ENCODE measurements at regions of chr5 and their contacts with region 1.

Region 1: GRCh38 chr5:32276173-32276853 is 36.4 kb downstream of the MTMR12 start:
- DNase-seq: peak; percentile 23
- ATAC-seq: no peak
- H3K4me3 ChIP-seq: no peak overlapping the region
- H3K27ac ChIP-seq: peak overlapping the region; percentile 67
- H3K4me1 ChIP-seq: peaks cover 93% of the 10 kb centered on the region
- H3K27me3 ChIP-seq: no peaks in the 10 kb centered on the region
- CTCF ChIP-seq: no peak
- EP300 ChIP-seq: no peak
- POLR2A ChIP-seq: no peak
- RAD21 ChIP-seq: no peak

Region 2: GRCh38 chr5:32004404-32004803 is 271.9 kb before region 1 on chr5:
- CTCF ChIA-PET with region 1: no interaction called
- POLR2A ChIA-PET with region 1: no interaction called
- in situ Hi-C with region 1: no loop called
- intact Hi-C with region 1: no loop called
- DNase-seq: no peak
- ATAC-seq: no peak
- H3K4me3 ChIP-seq: no peak overlapping the region
- H3K27ac ChIP-seq: no peak overlapping the region
- H3K4me1 ChIP-seq: no peaks in the 10 kb centered on the region
- H3K27me3 ChIP-seq: no peaks in the 10 kb centered on the region
- CTCF ChIP-seq: no peak
- EP300 ChIP-seq: no peak
- POLR2A ChIP-seq: no peak
- RAD21 ChIP-seq: no peak

Region 3: GRCh38 chr5:32329308-32329834 is 53.1 kb after region 1 on chr5:
- CTCF ChIA-PET with region 1: no interaction called
- POLR2A ChIA-PET with region 1: interaction called, 10 read pairs
- in situ Hi-C with region 1: no loop called
- intact Hi-C with region 1: loop called (anchors 5 kb)
- DNase-seq: peak; percentile 73
- ATAC-seq: peak; percentile 78
- H3K4me3 ChIP-seq: no peak overlapping the region
- H3K27ac ChIP-seq: peak overlapping the region; percentile 95
- H3K4me1 ChIP-seq: peaks cover 66% of the 10 kb centered on the region
- H3K27me3 ChIP-seq: no peaks in the 10 kb centered on the region
- CTCF ChIP-seq: peak; percentile 94
- EP300 ChIP-seq: no peak
- POLR2A ChIP-seq: no peak
- RAD21 ChIP-seq: peak; percentile 83

Region 4: GRCh38 chr5:32419791-32420190 is 143.5 kb after region 1 on chr5:
- CTCF ChIA-PET with region 1: no interaction called
- POLR2A ChIA-PET with region 1: no interaction called
- in situ Hi-C with region 1: no loop called
- intact Hi-C with region 1: no loop called
- DNase-seq: no peak
- ATAC-seq: peak; percentile 37; the same call in 2 of the 3 replicates
- H3K4me3 ChIP-seq: no peak overlapping the region
- H3K27ac ChIP-seq: no peak overlapping the region
- H3K4me1 ChIP-seq: no peaks in the 10 kb centered on the region
- H3K27me3 ChIP-seq: no peaks in the 10 kb centered on the region
- CTCF ChIP-seq: no peak
- EP300 ChIP-seq: no peak
- POLR2A ChIP-seq: no peak
- RAD21 ChIP-seq: no peak

Region 5: GRCh38 chr5:32498484-32498883 is 222.2 kb after region 1 on chr5:
- CTCF ChIA-PET with region 1: no interaction called
- POLR2A ChIA-PET with region 1: no interaction called
- in situ Hi-C with region 1: no loop called
- intact Hi-C with region 1: no loop called
- DNase-seq: no peak
- ATAC-seq: peak; percentile 52; the same call in 1 of the 3 replicates
- H3K4me3 ChIP-seq: no peak overlapping the region
- H3K27ac ChIP-seq: no peak overlapping the region
- H3K4me1 ChIP-seq: peaks cover 39% of the 10 kb centered on the region
- H3K27me3 ChIP-seq: no peaks in the 10 kb centered on the region
- CTCF ChIP-seq: no peak
- EP300 ChIP-seq: 0 out of 4 replicates have a peak, but pooled peaks of 1 of the 2 experiments have one; percentile 19
- POLR2A ChIP-seq: no peak
- RAD21 ChIP-seq: no peak